Right lobe of liver (tissue), 6 donors: ENCODE measurements at regions of chr22 and their contacts with region 1.

Region 1: GRCh38 chr22:20989323-20990138 is 7.4 kb downstream of the LZTR1 start:
- DNase-seq: no peak
- ATAC-seq: no peak
- H3K4me3 ChIP-seq: no peak overlapping the region
- H3K27ac ChIP-seq: no peak overlapping the region
- H3K4me1 ChIP-seq: no peaks in the 10 kb centered on the region
- H3K27me3 ChIP-seq: no peaks in the 10 kb centered on the region
- CTCF ChIP-seq: no peak
- POLR2A ChIP-seq: no peak

Region 2: GRCh38 chr22:20946080-20946986 is 43.2 kb before region 1 on chr22:
- intact Hi-C with region 1: loop called in 1 of 2 experiments (anchors 10 kb)
- DNase-seq: no peak
- ATAC-seq: peak in 1 of 4 donors; percentile 15
- H3K4me3 ChIP-seq: no peak overlapping the region
- H3K27ac ChIP-seq: no peak overlapping the region
- H3K4me1 ChIP-seq: peaks cover 0 to 36% (median 11%) of the 10 kb centered on the region in 4 donors
- H3K27me3 ChIP-seq: no peaks in the 10 kb centered on the region
- CTCF ChIP-seq: no peak
- POLR2A ChIP-seq: no peak